ENCODE measurements at regions of chr2 and their contacts with region 1.

Region 1: GRCh38 chr2:75640621-75641121 is 5.9 kb upstream of the MRPL19 start:
- DNase-seq: peak; percentile 40
- ATAC-seq: peak; percentile 98
- H3K4me3 ChIP-seq: no peak overlapping the region
- H3K27ac ChIP-seq: no peak overlapping the region
- H3K4me1 ChIP-seq: peaks cover under 1 to 5% of the 10 kb centered on the region in 2 experiments; a peak in 2 of 4 replicates
- H3K27me3 ChIP-seq: peaks cover 28% of the 10 kb centered on the region; the same call in 1 of the 2 replicates
- CTCF ChIP-seq: peak; percentile 78 to 98 (median 98)
- POLR2A ChIP-seq: no peak
- RAD21 ChIP-seq: peak; percentile 87

Region 2: DNA sequence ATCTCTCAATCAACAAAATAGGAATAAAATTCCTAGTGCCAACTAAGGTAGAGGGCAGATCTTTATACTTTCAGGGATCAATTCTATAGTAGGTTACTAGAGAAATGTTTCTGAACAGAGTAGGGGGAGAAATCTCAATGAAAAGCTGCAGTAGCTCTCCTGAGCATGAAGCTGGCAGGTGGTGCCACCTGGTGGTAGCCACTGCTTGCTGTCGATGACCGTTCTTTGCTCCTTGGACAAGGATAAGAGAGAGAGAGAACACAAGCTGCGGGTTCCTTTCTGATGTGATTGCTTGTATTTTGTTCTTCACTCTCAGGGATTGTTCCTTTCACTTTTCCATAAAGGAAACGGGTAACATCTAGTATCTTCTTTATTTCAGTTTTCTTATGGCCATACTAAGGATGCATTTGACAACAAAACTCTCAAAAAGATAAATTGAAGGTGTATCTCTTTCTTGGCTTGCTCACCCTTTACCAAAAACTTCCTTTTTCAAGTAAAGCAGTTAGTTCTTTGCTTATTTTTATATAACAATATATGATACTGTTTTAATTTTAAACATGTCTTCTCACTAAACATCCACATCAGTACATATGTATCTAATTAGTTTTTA is 12.7 kb before region 1 on chr2:
- CTCF ChIA-PET with region 1: interaction called, 14 read pairs
- POLR2A ChIA-PET with region 1: no interaction called
- RAD21 ChIA-PET with region 1: no interaction called
- intact Hi-C with region 1: no loop called
- DNase-seq: peak; percentile 57
- ATAC-seq: peak; percentile 97
- H3K4me3 ChIP-seq: no peak overlapping the region
- H3K27ac ChIP-seq: no peak overlapping the region
- H3K4me1 ChIP-seq: no peaks in the 10 kb centered on the region
- H3K27me3 ChIP-seq: no peaks in the 10 kb centered on the region
- CTCF ChIP-seq: peak; percentile 60 to 97 (median 96); a peak in 5 of 6 replicates
- POLR2A ChIP-seq: no peak
- RAD21 ChIP-seq: peak; percentile 74

Region 3: DNA sequence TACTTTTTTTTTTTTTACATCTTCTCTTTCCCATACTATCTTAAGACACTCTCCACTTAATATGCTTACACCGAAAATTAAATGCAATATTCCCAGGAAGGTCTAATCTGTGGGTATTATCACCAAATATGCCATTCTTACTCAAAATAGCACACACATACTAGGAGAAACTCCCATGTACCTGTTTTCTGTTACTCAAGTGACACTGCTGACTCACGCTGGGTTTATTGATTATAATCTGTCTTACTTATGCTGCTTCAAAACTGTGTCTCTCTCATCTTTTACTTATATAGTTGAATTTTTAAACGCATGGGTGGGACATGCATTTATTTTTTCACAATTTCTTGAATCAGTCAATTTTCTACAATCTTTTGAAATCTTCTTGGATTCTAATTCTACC is 35.8 kb after region 1 on chr2:
- CTCF ChIA-PET with region 1: interaction called, 32 read pairs
- POLR2A ChIA-PET with region 1: no interaction called
- RAD21 ChIA-PET with region 1: interaction called in 1 of 2 experiments, 5 read pairs
- intact Hi-C with region 1: loop called (anchors 1 kb)
- DNase-seq: no peak
- ATAC-seq: no peak
- H3K4me3 ChIP-seq: no peak overlapping the region
- H3K27ac ChIP-seq: no peak overlapping the region
- H3K4me1 ChIP-seq: no peaks in the 10 kb centered on the region
- H3K27me3 ChIP-seq: no peaks in the 10 kb centered on the region
- CTCF ChIP-seq: no peak
- POLR2A ChIP-seq: no peak
- RAD21 ChIP-seq: no peak

Region 4: GRCh38 chr2:75716406-75716805 is 75.7 kb after region 1 on chr2:
- CTCF ChIA-PET with region 1: interaction called, 10 read pairs
- POLR2A ChIA-PET with region 1: no interaction called
- RAD21 ChIA-PET with region 1: interaction called in 1 of 2 experiments, 11 read pairs
- intact Hi-C with region 1: loop called (anchors 2 kb)
- DNase-seq: no peak
- ATAC-seq: no peak
- H3K4me3 ChIP-seq: no peak overlapping the region
- H3K27ac ChIP-seq: no peak overlapping the region
- H3K4me1 ChIP-seq: peaks cover 1% of the 10 kb centered on the region in 2 experiments; a peak in 2 of 4 replicates
- H3K27me3 ChIP-seq: no peaks in the 10 kb centered on the region
- CTCF ChIP-seq: no peak
- POLR2A ChIP-seq: no peak
- RAD21 ChIP-seq: peak; percentile 42

Region 5: DNA sequence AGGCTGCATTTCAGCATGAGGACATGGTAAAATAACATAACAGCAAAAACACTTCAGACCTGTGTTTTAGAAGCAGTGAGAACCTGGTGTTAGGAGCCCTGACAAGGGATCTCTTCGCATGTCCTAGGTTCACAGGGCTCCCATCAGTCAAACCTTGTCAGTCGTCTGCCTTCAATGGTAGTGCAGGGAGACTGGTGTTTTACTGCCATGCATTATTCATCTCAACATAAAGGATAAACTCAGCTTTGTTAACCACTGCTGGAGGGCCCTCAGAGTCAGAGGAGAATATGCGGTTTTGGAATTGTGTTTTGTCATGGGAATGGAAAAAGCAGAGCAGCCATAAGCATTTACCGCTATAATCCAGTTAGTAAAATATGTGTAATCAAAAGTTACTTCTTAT is 345.9 kb after region 1 on chr2:
- CTCF ChIA-PET with region 1: no interaction called
- POLR2A ChIA-PET with region 1: no interaction called
- RAD21 ChIA-PET with region 1: no interaction called
- intact Hi-C with region 1: no loop called
- DNase-seq: no peak
- ATAC-seq: no peak
- H3K4me3 ChIP-seq: no peak overlapping the region
- H3K27ac ChIP-seq: no peak overlapping the region
- H3K4me1 ChIP-seq: no peaks in the 10 kb centered on the region
- H3K27me3 ChIP-seq: no peaks in the 10 kb centered on the region
- CTCF ChIP-seq: no peak
- POLR2A ChIP-seq: no peak
- RAD21 ChIP-seq: no peak

Measured in HCT116 (cell line).